SK-N-SH (cell line): ENCODE measurements at regions of chr3 and their contacts with region 1.

Region 1: GRCh38 chr3:12810013-12810780 is 13.7 kb downstream of the CAND2 start:
- DNase-seq: peak; percentile 100
- H3K4me3 ChIP-seq: peak overlapping the region; percentile 57 to 71
- H3K27ac ChIP-seq: peak overlapping the region; percentile 4 to 84; a peak in 3 of 4 replicates
- H3K4me1 ChIP-seq: peaks cover 6 to 15% of the 10 kb centered on the region in 2 experiments; a peak in 2 of 4 replicates
- H3K27me3 ChIP-seq: no peaks in the 10 kb centered on the region
- CTCF ChIP-seq: peak; percentile 73
- EP300 ChIP-seq: no peak
- RAD21 ChIP-seq: peak; percentile 46

Region 2: GRCh38 chr3:12796171-12797123 is 13.8 kb before region 1 on chr3 and contains the start of gene CAND2:
- CTCF ChIA-PET with region 1: interaction called, 29 read pairs
- POLR2A ChIA-PET with region 1: interaction called, 9 read pairs
- DNase-seq: peak; percentile 86
- H3K4me3 ChIP-seq: peak within 1 kb of the TSS; percentile 52
- H3K27ac ChIP-seq: peak within 1 kb of the TSS in 1 of 2 experiments; percentile 44; a peak in 1 of 4 replicates
- H3K4me1 ChIP-seq: peaks cover 0 to 5% of the 10 kb centered on the region in 2 experiments; a peak in 2 of 4 replicates
- H3K27me3 ChIP-seq: no peaks in the 10 kb centered on the region
- CTCF ChIP-seq: no peak
- EP300 ChIP-seq: no peak
- RAD21 ChIP-seq: no peak
- polyA plus RNA-seq, gene CAND2: 1.5 TPM in 2 replicates

Region 3: DNA sequence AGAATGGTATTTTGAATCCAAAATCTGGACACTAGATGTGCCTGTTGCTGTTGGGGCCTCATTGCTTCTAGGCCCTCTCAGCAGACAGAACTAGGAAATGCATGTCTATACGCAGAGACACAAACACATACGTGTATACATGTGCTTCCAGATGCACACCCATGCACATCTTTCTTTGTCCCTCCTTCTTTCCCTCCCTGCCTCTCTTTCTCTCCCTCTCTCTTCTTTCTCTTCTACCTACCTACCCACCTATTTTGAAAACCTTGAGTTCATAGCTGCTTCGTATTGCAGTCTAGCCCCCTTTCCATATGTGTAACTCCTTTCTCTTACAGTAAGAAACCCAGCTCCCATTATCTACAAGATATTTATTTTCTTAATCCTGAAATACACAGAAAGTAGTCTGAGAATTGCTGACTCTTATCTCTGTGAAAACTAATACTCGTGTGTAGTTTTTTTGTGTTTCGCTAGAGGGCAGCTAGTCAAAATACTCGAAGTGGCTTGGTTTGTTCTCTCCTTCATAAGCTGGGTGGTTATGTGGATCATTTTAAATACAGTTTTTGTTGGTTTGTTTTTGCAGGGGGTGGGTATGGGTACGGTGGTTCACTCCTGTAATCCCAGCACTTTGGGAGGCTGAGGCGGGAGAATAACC is 12.7 kb after region 1 on chr3:
- CTCF ChIA-PET with region 1: interaction called, 10 read pairs
- POLR2A ChIA-PET with region 1: no interaction called
- DNase-seq: no peak
- H3K4me3 ChIP-seq: no peak overlapping the region
- H3K27ac ChIP-seq: no peak overlapping the region
- H3K4me1 ChIP-seq: no peaks in the 10 kb centered on the region
- H3K27me3 ChIP-seq: no peaks in the 10 kb centered on the region
- CTCF ChIP-seq: peak; percentile 35
- EP300 ChIP-seq: no peak
- RAD21 ChIP-seq: no peak

Region 4: DNA sequence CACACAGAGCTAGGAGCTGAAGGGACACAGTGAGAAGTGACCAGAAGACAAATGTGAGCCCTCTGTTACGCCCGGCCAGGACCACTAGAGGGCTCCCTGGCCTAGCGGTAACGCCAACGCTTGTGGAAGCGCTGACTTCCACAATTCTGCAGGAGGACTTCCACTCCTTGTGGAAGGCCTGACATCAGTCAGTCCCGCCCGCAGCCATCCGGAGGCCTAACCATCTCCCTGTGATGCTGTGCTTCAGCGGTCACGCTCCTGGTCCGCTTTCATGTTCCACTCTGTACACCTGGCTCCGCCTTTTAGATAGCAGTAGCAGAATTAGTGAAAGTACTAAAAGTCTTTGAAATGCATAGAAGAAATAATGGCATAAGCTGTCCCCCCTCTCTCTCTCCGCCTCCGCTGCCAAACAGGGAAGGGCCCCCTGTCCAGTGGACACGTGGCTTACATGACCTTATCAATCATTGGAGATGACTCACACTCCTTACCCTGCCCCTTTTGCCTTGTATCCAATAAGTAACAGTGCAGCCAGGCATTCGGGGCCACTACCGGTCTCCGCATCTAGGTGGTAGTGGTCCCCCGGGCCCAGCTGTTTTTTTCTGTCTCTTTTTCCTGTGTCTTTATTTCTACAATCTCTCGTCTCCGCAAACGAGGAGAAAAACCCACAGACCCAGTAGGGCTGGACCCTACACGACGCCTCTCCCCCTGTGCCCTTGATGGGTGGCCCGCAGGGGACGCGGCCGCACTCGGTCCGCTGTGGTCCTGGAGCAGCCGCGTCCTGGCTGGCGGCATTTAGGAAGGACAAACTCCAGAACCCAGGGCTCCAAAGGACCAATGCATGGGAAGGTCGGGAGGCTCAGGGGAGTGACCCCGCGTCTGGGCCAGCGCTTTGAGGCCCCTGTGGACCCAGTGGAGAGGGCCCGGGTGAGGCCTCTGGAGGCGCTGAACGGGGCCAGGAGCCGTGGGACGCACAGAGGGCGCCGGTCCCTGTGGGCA is 58.1 kb after region 1 on chr3:
- CTCF ChIA-PET with region 1: no interaction called
- POLR2A ChIA-PET with region 1: no interaction called
- DNase-seq: peak; percentile 89
- H3K4me3 ChIP-seq: peak overlapping the region in 1 of 2 experiments; percentile 10; a peak in 1 of 4 replicates
- H3K27ac ChIP-seq: no peak overlapping the region
- H3K4me1 ChIP-seq: peaks cover 0 to 12% of the 10 kb centered on the region in 2 experiments; a peak in 1 of 4 replicates
- H3K27me3 ChIP-seq: no peaks in the 10 kb centered on the region
- CTCF ChIP-seq: peak; percentile 84
- EP300 ChIP-seq: no peak
- RAD21 ChIP-seq: peak; percentile 94

Region 5: DNA sequence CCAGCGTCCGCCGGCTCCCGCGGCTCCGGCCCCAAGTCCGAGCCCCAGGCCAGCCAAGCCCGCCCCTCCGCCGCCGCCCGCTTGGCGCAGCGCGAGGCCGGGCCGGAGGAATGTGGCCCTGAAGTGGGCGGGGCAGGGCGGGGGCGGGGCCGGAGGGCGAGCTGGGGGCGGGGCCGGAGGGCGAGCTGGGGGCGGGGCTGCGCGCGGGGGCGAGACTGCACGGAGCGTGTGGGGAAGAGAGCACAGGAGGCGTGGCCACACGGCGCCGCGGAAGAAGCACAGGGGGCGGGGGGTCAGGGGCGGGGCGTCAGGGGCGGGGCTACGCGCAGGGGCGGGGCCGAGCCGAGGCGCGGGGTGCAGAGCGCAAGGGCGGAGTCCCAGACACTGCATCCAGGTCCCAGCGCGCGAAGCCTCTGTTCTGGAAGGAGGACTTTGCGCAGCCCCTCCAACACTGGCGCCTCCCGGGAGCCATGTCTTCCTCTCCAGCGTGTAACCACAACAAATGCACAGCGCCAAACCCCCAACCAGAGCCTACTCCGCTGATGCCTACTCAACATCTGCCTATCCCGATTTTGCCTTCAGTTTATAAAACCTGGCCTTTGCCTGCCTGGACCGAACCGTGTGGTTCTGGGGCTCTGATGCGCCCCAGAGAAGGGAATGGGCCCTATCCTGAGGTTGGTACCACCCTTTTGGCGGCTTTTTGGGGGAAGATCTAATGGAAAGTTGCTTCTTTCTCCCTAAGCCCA is 157.6 kb after region 1 on chr3:
- CTCF ChIA-PET with region 1: no interaction called
- POLR2A ChIA-PET with region 1: no interaction called
- DNase-seq: peak; percentile 100
- H3K4me3 ChIP-seq: peak overlapping the region; percentile 65 to 82
- H3K27ac ChIP-seq: peak overlapping the region in 1 of 2 experiments; percentile 21; a peak in 2 of 4 replicates
- H3K4me1 ChIP-seq: peaks cover 0 to 56% of the 10 kb centered on the region in 2 experiments; a peak in 2 of 4 replicates
- H3K27me3 ChIP-seq: no peaks in the 10 kb centered on the region
- CTCF ChIP-seq: no peak
- EP300 ChIP-seq: no peak
- RAD21 ChIP-seq: no peak